ENCODE measurements at regions of chr11 and their contacts with region 1.

Region 1: GRCh38 chr11:108929241-108929640 is 264.4 kb downstream of the DDX10 start:
- DNase-seq: no peak
- CTCF ChIP-seq: no peak

Region 2: DNA sequence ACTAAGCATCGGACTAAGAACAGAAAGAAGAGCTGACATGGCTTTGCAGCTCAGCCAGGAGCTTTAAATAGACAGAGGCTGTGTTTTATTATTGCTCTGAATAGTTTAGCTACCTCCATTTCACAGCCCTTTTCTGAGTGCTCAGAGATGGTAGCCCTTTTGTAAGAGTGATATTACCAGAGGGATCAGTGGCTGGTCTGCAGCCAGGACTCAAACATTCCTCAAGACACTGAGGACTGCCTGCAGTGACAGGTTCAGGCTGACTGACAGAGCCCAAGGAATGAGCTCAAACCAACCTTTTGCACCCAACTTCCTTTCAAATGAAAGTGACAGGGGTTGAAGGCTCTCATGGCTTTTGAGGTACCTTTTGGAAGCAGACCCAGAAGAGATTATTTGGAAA is 75.4 kb before region 1 on chr11:
- CTCF ChIA-PET with region 1: no interaction called
- POLR2A ChIA-PET with region 1: no interaction called
- DNase-seq: no peak
- CTCF ChIP-seq: no peak

Region 3: GRCh38 chr11:108872781-108873291 is 56.4 kb before region 1 on chr11:
- CTCF ChIA-PET with region 1: no interaction called
- POLR2A ChIA-PET with region 1: no interaction called
- DNase-seq: no peak
- CTCF ChIP-seq: no peak

Region 4: DNA sequence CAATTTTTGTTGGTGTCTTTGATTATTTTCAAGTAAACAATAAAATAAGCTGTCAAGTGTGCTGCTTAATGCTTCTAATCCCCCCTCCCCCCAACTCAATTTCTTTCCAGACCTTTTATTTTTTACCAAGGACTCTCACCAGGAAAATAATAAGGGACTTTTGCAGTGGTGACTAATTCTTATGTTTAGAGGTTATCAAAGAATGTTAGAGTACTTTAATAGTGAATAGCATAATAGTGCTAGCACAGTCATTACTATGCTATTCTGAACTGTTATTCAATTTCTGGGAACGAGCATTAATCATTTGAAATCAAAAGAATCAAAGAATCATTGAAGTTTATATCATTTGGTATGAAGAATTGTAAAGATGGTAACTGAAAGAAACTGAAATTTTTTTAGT is 13.0 kb before region 1 on chr11:
- CTCF ChIA-PET with region 1: interaction called, 10 read pairs
- POLR2A ChIA-PET with region 1: no interaction called
- DNase-seq: no peak
- CTCF ChIP-seq: no peak

Measured in GM10248 (cell line).